ENCODE measurements at regions of chr10 and their contacts with region 1.

Region 1: DNA sequence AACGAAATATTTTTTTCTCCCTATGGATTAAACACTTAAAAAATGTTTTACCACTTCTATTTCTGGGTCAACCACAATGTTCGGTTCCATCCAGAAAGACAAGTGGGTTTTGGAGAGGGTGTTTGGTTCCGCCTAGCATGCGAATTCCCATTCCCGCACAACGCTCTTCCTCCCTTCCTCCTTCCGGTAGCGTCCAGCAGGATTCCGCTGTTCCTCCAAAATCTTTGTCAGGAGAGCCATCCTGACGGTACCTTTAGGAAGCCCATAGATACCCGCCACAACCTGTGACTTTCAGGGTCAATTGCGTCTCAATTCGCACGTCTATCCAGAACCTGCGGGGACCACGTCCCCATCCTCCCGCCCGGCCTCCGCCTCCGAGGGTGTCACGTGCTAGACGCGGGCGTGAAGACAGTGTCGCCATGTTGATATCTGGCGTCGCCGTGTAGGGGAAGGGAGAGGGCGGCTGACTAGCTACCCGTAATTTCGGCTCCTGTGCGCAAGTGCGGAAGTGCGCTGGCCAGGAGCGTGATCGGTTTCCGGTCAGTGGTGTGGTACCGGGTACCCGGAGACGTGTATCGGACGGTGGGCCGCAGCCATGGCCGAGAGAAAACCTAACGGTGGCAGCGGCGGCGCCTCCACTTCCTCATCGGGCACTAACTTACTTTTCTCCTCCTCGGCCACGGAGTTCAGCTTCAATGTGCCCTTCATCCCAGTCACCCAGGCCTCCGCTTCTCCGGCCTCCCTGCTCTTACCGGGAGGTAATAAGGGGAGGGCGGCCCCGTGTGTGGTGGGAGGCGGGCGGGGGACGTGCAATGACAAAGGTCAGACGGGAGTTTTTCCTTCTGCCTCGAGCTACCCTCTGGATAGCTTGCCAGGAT is at the start of gene SEC23IP:
- DNase-seq: peak; percentile 94 to 96
- ATAC-seq: peak; percentile 100
- H3K4me3 ChIP-seq: peak within 1 kb of the TSS; percentile 85 to 100 (median 98)
- H3K27ac ChIP-seq: peak within 1 kb of the TSS; percentile 88 to 97 (median 94)
- H3K4me1 ChIP-seq: peaks cover 33 to 34% of the 10 kb centered on the region in 2 donors
- H3K27me3 ChIP-seq: no peaks in the 10 kb centered on the region
- CTCF ChIP-seq: peak in 2 of 5 experiments; percentile 8 to 18
- POLR2A ChIP-seq: peak; percentile 75 to 90
- total RNA-seq, gene SEC23IP: 12.6 to 28.6 (median 21.6) TPM

Region 2: DNA sequence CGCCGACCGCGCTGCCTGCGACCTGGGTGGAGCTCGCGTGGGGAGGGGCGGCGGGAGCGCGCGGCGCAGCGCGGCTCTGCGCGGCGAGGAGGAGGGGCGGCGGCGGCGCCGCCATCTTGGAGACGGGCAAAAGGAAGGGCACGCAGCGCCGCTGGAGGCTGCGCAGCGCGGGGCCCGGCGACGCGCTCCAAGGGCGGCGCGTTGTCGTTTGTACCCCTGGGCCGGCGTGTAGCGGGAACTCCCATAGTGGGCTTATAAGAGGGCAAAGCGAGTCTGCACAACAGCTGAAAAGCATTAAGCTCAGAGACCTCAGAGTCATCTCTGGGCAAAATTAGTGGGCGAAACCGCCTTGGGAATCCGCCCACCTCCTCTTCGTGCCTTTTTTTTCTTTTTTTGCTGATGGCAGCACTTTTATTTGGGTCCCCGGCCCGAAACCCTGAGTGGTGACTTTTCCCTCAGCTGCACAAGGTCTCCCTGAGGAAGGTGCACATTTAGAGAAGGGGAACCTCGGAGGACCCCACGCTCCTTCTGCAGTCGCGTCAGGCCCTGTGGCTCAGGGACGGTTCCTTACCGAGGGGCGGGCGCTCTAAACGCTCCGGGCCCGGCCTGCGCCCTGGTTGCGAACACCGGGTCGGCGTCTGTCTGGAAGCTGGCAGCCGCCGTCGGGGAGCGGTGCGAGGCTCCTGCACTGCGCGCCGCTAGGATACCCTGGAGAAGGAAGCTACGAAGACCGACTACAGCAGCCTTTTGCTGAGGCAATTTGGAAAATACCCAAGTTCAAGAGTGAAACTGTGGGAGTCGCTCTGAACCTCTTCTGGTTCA is 19.4 kb before region 1 on chr10:
- in situ Hi-C with region 1: no loop called
- intact Hi-C with region 1: loop called (anchors 1 kb)
- DNase-seq: peak; percentile 71 to 81
- ATAC-seq: peak; percentile 92 to 93
- H3K4me3 ChIP-seq: peak overlapping the region; percentile 85 to 96 (median 90)
- H3K27ac ChIP-seq: peak overlapping the region; percentile 89 to 97 (median 92)
- H3K4me1 ChIP-seq: peaks cover 17 to 28% of the 10 kb centered on the region in 2 donors
- H3K27me3 ChIP-seq: no peaks in the 10 kb centered on the region
- CTCF ChIP-seq: peak in 1 of 5 experiments; percentile 2
- POLR2A ChIP-seq: peak in 1 of 2 donors; percentile 42

Region 3: GRCh38 chr10:120041807-120042559 is 149.6 kb after region 1 on chr10:
- in situ Hi-C with region 1: no loop called
- intact Hi-C with region 1: no loop called
- DNase-seq: no peak
- ATAC-seq: no peak
- H3K4me3 ChIP-seq: no peak overlapping the region
- H3K27ac ChIP-seq: no peak overlapping the region
- H3K4me1 ChIP-seq: no peaks in the 10 kb centered on the region
- H3K27me3 ChIP-seq: no peaks in the 10 kb centered on the region
- CTCF ChIP-seq: no peak
- POLR2A ChIP-seq: no peak

Measured in gastrocnemius medialis (tissue), 4 donors.